Aorta (tissue), 5 donors: ENCODE measurements at regions of chr3 and their contacts with region 1.

Region 1: DNA sequence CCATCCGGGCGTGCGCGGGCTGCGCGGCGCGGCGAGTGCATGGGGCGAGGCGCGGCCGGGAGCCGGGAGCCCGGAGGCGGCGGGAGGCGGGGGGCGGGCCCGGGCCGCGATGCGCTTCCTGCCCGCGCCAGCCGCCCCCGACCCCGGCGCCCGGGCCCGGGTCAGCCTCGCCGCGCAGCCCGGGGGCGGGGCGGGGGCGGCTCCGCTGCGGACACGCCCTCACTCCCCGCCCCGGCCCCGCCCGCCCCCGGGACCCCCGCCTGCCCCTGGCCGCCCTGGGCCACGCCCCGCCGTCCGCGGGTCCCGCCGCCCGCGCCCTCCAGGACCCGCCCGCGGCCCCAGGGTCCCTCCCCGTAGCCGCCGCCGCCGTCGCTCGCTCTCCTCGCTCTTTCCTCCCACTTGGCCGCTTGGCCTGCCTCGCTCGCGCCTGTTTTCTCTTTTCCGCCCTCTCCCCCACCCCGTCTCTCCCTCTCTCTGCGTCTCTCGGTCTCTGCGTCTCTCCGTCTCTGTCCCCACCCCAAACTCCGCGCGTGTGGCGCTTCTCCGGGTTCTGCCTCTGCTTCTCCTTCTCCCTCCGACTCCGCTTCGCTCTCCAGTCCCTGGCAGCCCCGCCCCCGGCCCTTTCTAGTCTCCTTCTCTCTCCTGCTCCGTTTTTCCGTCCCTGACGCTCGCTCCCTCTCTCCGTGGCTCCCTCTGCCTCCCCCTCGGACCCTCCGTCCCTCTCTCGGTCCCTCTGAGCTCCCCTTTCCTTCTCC is at the start of gene PLXND1:
- DNase-seq: peak; percentile 90 to 91
- ATAC-seq: peak; percentile 79
- H3K4me3 ChIP-seq: peak within 1 kb of the TSS; percentile 31 to 59
- H3K27ac ChIP-seq: peak within 1 kb of the TSS in 1 of 2 donors; percentile 95
- H3K4me1 ChIP-seq: no peaks in the 10 kb centered on the region
- H3K27me3 ChIP-seq: no peaks in the 10 kb centered on the region
- total RNA-seq, gene PLXND1: 176 to 358 TPM

Region 2: DNA sequence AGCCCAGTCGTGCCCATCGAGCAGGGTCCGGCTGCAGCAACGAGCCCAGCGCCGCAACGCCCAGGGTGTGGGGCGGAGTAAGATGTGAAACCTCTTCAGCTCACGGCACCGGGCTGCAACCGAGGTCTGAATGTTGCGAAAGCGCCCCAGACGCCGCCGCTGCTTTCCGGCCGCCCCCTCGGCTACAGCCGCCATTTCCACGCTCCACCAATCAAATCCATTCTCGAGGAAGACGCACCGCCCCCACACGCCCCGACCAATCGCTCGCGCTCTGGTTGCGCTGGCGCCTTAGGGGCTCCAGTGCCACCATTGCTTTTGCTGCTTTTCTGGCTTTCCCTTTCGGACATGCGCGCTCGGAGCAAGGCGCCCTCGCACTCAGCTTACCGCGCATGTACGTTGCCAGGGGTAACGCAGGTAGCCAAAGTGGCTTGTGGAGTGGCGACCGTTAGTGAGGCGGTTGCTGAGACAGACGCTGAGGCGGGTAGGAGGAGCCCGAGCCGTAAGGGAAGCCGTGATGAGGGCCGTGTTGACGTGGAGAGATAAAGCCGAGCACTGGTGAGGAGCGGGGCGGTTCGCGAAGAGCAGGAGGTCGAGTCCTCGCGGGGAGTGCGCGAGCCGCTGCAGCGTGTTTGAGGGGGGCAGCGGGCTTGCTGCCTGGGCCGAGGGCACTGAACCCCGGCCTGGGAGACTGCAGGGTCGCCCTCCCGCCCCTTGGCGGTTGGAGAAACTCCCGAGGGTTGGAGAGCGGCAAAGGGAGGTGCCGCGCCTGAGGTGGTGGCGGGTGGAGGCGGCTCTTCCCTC is 166.8 kb before region 1 on chr3 and contains the starts of genes IFT122 and MBD4:
- intact Hi-C with region 1: loop called in 1 of 2 experiments (anchors 5 kb)
- DNase-seq: peak; percentile 98 to 99
- ATAC-seq: peak; percentile 97
- H3K4me3 ChIP-seq: peak within 1 kb of the TSS; percentile 73 to 80
- H3K27ac ChIP-seq: peak within 1 kb of the TSS; percentile 16 to 58
- H3K4me1 ChIP-seq: peaks cover 0 to 4% of the 10 kb centered on the region in 2 donors
- H3K27me3 ChIP-seq: no peaks in the 10 kb centered on the region
- total RNA-seq, gene IFT122: 30.8 to 33.5 TPM
- total RNA-seq, gene MBD4: 23.9 to 31.2 TPM

Region 3: GRCh38 chr3:129490242-129491045 is 116.4 kb before region 1 on chr3:
- intact Hi-C with region 1: loop called (anchors 5 kb)
- DNase-seq: peak; percentile 92 to 95
- ATAC-seq: peak; percentile 92
- H3K4me3 ChIP-seq: no peak overlapping the region
- H3K27ac ChIP-seq: peak overlapping the region; percentile 62 to 86
- H3K4me1 ChIP-seq: peaks cover 0 to 2% of the 10 kb centered on the region in 2 donors
- H3K27me3 ChIP-seq: no peaks in the 10 kb centered on the region

Region 4: DNA sequence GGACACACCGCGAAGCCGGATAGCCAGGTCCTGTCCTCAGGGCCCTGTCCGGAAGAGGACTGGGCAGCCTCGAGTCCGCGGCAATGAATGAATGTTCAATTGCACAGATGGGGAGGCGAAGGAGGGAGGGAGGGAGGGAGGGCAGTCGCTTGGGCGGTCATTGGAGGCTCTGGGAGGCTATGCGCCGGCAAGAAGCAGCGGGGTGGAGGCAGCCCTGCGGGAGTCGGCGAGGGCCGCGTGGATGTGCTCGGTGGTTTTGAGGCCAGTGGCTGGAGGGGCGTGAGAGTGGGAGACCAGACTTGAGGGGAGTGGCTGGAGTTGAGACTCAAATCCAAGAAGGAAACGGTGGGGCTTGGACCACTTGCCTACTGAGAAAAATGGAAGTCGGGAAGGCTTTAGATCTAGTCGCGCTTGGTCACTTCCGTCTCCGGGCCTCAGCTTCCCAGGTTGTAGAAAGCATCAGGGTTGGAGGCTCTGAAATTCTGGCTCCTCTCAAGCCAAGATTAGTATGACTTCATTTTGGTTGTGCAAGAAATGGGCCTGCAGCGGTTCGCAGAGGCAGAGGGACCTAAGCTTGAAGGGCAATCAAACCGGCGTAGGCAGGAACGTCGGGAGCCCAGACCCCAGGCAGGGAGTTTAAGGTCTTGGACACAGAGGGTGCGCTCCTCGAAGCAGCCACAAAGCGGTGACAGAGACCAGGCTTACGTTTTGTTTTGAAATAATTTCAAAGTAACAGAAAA is 20.8 kb after region 1 on chr3:
- intact Hi-C with region 1: loop called in 1 of 2 experiments (anchors 2 kb)
- DNase-seq: peak; percentile 87 to 88
- ATAC-seq: peak; percentile 76
- H3K4me3 ChIP-seq: peak overlapping the region; percentile 5 to 36
- H3K27ac ChIP-seq: peak overlapping the region; percentile 77 to 98
- H3K4me1 ChIP-seq: no peaks in the 10 kb centered on the region
- H3K27me3 ChIP-seq: no peaks in the 10 kb centered on the region